CD14-positive monocyte (primary cell): ENCODE measurements at regions of chr21 and their contacts with region 1.

Region 1: DNA sequence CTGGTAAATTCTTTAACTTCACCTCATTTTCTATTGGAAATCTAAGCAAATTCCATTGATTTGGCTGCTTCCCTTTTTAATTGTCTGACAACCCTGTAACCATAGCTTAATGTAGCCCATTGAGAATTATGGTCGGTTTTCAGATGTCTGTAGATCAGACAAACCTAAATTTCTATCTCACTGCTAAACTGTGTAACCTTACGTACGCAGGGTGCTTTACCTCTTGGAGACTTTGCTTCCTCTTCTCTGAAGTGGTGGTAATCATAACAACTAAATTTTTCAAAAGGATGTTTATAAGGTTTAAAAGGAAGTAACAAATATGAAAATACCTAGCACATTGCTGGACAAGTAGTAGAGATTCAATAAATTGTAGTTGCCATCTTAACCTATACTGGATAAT is 25.9 kb downstream of the IFNAR1 start:
- DNase-seq: no peak
- H3K4me3 ChIP-seq: no peak overlapping the region
- H3K4me3 Mint-ChIP-seq: no peak overlapping the region
- H3K27ac ChIP-seq: peak overlapping the region in 1 of 2 donors; percentile 14
- H3K27ac Mint-ChIP-seq: peak overlapping the region in 1 of 7 donors; percentile 1
- H3K4me1 ChIP-seq: no peaks in the 10 kb centered on the region
- H3K4me1 Mint-ChIP-seq: peaks cover 7% of the 10 kb centered on the region
- H3K27me3 ChIP-seq: no peaks in the 10 kb centered on the region
- H3K27me3 Mint-ChIP-seq: peaks cover 0 to 1% (median 0%) of the 10 kb centered on the region in 3 donors
- CTCF ChIP-seq: no peak

Region 2: DNA sequence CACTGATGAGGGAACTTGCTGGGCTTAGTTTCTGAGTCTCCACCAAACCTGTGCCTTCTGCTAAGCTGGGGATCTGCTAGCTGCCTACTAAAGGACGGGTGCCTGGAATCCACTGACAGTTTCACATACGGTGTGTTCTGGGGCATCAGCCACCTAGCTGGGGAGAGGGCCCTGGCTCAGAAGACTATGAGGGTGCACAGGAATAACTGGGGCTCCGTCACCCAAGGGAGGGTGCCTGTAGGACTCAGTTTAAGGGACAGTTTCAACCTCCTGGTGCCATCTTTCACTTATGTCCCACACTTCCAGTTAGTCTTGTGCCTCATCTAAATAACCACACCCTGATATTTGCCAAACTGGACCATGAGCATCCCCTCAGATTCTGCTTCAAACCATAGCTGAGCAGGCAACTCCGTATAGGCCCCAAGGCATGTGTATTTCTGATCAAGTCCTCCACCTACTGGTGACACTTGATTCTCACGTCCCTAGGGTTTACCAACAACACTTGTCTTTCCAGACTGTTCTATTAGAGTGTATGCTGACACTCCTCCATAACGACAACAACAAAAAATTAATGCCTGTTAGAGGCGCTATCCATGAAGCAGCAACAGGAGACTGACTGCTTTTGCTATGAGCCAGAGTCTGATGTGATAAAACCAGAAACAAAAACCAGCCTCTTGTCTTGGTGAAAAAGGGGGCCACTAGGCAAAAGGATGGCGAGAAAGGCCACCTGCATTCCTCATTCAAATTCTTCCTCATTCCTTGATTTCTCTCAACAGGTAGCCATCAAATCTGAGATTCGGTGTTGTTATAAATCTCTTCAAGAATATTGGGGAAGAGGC is 524.1 kb before region 1 on chr21:
- intact Hi-C with region 1: loop called in 1 of 2 experiments (anchors 5 kb)
- DNase-seq: peak; percentile 7 to 26 (median 21)
- H3K4me3 ChIP-seq: no peak overlapping the region
- H3K4me3 Mint-ChIP-seq: no peak overlapping the region
- H3K27ac ChIP-seq: no peak overlapping the region
- H3K27ac Mint-ChIP-seq: peak overlapping the region in 1 of 7 donors; percentile 13
- H3K4me1 ChIP-seq: no peaks in the 10 kb centered on the region
- H3K4me1 Mint-ChIP-seq: no peaks in the 10 kb centered on the region
- H3K27me3 ChIP-seq: no peaks in the 10 kb centered on the region
- H3K27me3 Mint-ChIP-seq: peaks cover 0 to 8% (median 4%) of the 10 kb centered on the region in 3 donors
- CTCF ChIP-seq: peak; percentile 62